Activated naive CD4-positive, alpha-beta T cell treated with anti-CD3 and anti-CD28 coated beads for 36 hours (primary cell): ENCODE measurements at regions of chr11 and their contacts with region 1.

Region 1: GRCh38 chr11:20363500-20364411 is at the start of gene HTATIP2:
- DNase-seq: peak; percentile 75
- H3K4me3 Mint-ChIP-seq: peak within 1 kb of the TSS; percentile 82
- H3K27ac Mint-ChIP-seq: peak within 1 kb of the TSS; percentile 91
- H3K4me1 Mint-ChIP-seq: peaks cover 68% of the 10 kb centered on the region
- H3K27me3 Mint-ChIP-seq: no peaks in the 10 kb centered on the region
- total RNA-seq, gene HTATIP2: 78.3 to 80.7 TPM

Region 2: DNA sequence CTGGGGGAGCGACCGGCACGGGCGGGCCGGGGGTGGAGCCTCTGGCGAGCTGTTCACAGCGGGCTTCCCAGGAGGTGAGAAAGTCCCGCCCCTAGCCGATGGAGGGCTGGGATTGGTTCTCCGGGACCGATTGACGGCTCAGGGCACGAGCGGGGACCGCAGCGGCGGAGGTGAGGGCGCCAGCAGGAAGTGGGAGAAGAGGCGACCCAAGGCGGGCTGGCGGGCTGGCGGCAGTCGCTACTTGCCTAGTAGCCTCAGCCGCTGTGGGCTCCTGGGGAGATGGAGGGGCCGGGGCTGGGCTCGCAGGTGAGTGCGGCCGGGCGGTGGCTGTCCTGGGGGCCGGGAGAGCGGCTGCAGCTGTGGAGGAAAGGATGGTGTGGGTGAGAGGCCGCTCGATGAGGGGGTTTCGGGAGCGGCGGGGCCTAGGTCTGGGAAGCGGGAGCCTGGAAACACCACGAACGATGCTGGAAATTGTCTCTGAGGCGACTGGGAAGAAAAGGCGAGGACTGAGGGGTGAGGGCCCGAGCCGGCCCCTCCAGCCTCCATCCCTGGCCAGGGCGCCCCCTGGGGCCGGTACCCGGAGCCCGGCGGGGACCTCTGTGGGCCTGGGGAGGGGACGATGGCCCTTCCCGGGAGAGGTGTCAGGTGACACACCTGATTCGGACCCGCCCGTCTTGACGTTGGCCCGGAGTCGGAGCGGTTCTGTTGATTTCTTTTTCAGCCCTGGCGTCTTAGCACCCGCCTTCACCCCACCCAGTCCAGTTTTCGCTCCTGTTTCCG is 1246.6 kb before region 1 on chr11 and contains the start of gene ZDHHC13:
- CTCF ChIA-PET with region 1: no interaction called
- intact Hi-C with region 1: loop called (anchors 5 kb)
- DNase-seq: peak; percentile 98
- H3K4me3 Mint-ChIP-seq: peak within 1 kb of the TSS; percentile 89
- H3K27ac Mint-ChIP-seq: peak within 1 kb of the TSS; percentile 79
- H3K4me1 Mint-ChIP-seq: peaks cover 49% of the 10 kb centered on the region
- H3K27me3 Mint-ChIP-seq: no peaks in the 10 kb centered on the region
- total RNA-seq, gene ZDHHC13: 20.9 to 25.1 TPM

Region 3: GRCh38 chr11:19723572-19724342 is 640.0 kb before region 1 on chr11:
- CTCF ChIA-PET with region 1: no interaction called
- intact Hi-C with region 1: loop called (anchors 5 kb)
- DNase-seq: peak; percentile 69
- H3K4me3 Mint-ChIP-seq: no peak overlapping the region
- H3K27ac Mint-ChIP-seq: peak overlapping the region; percentile 84
- H3K4me1 Mint-ChIP-seq: peaks cover 23% of the 10 kb centered on the region
- H3K27me3 Mint-ChIP-seq: no peaks in the 10 kb centered on the region